Common myeloid progenitor, CD34-positive (primary cell): ENCODE measurements at regions of chr14 and their contacts with region 1.

Region 1: DNA sequence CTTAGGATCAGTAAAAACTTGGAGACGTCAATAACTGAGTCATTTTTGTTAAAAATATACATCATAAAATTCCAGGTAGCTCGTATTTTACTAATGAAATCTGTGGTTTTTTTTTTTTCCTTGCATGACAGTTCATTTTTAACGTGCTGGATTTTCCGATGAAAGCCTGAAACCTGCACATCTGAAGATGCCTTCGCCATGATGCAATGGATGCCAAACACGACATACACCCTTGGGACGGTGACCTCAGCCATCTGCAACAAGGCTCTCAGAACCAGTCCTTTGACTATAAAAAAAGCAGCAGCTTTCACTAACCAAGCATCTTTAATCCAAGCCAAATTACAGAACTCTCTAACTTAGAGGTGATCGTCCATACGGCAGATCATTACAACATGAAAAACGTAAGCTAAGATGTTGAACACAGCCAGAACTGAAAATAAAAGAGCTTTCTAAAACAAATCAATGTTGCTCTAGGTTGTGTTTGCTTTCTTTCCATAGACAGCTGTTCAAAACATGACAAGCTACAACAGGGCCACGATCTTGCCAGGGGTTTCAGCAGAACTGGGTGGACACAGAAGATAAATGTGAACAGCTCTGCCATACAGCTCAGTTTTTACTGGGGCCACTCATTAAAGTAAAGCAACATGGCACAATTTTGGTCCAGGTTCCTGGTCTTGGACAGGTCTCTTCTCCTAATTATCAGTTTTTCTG is 7.8 kb downstream of the NIN start:
- DNase-seq: peak in 1 of 3 donors; percentile 18
- H3K4me3 ChIP-seq: peak overlapping the region in 4 of 7 experiments; percentile 42 to 68 (median 56)
- H3K27ac ChIP-seq: peak overlapping the region; percentile 31 to 72
- H3K4me1 ChIP-seq: peaks cover 42 to 67% (median 54%) of the 10 kb centered on the region in 4 experiments
- H3K27me3 ChIP-seq: no peaks in the 10 kb centered on the region

Region 2: GRCh38 chr14:50798048-50798421 is 25.2 kb before region 1 on chr14:
- CTCF ChIA-PET with region 1: interaction called, 13 read pairs
- POLR2A ChIA-PET with region 1: no interaction called
- DNase-seq: no peak
- H3K4me3 ChIP-seq: no peak overlapping the region
- H3K27ac ChIP-seq: no peak overlapping the region
- H3K4me1 ChIP-seq: no peaks in the 10 kb centered on the region
- H3K27me3 ChIP-seq: no peaks in the 10 kb centered on the region

Region 3: DNA sequence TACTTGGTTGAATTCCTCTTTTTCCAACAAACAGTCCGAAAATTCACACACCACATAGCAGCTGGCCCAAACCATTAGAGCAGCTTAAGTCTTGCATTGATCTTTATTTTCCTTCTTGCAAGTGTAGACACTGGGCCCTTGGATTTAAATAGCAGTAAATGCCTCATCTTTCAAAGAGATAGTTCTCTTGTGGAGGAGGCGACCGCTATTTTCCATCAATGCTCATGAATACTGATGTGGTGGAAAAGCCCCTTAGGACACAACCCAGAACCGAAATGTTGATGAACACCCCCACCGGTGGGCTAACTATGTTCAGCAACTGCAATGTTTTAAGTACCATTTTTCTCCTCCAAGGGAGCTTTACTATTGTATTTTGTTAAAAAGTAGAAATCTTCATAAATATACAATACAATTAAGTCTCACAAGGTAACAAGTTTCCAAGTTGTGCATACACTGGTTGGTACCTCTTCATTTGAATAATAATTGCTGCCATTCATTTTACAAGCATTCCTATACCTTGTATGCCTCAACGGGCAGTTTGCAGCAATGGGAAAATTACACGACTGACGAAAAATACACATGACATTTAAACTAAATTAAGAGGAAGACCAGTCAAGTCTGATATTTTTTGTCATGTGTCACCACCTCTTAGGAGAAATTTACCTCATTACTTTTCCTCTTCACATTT is 10.2 kb before region 1 on chr14:
- CTCF ChIA-PET with region 1: interaction called, 21 read pairs
- POLR2A ChIA-PET with region 1: no interaction called
- DNase-seq: peak in 1 of 3 donors; percentile 31
- H3K4me3 ChIP-seq: peak overlapping the region in 6 of 7 experiments; percentile 17 to 63 (median 48)
- H3K27ac ChIP-seq: peak overlapping the region in 1 of 2 experiments; percentile 62
- H3K4me1 ChIP-seq: peaks cover 15 to 32% (median 20%) of the 10 kb centered on the region in 4 experiments
- H3K27me3 ChIP-seq: no peaks in the 10 kb centered on the region

Region 4: DNA sequence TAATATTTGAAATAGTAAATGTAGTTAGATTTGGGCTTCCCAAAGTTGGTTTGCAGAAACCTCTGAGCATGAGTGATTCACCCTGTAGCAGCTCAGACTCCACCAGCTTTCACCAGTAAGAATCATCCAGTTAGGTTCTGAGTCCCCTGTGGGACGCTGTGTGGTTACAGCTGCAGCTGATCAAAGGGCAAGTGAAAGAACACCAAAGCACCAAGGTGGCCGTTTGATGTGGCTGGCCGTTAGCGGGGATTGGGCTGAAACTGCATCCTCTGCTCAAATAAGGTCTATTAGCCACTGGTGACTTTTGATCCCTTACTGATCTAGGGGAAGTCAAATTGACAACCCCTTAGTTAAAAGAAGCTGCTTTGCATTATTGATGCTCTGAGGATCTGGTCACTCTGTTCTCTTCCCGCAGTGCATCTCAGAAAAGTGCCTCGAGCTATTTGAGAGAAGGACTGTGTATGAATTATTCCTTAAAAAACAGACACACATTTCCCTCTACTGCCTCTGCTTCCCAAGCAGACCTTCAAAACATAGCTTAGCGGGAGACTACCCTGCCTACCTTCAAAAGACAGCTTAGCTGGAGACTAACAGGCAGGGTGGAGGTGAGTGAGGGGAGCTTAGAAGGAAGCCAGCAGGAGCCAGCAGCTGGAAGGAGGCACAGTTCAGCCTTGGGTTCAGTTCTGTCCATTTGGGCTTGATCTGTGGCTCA is 52.3 kb after region 1 on chr14:
- CTCF ChIA-PET with region 1: no interaction called
- POLR2A ChIA-PET with region 1: no interaction called
- DNase-seq: peak in 2 of 3 donors; percentile 82 to 83
- H3K4me3 ChIP-seq: no peak overlapping the region
- H3K27ac ChIP-seq: no peak overlapping the region
- H3K4me1 ChIP-seq: peaks cover 7 to 23% (median 19%) of the 10 kb centered on the region in 4 experiments
- H3K27me3 ChIP-seq: peaks cover 0 to 19% (median 4%) of the 10 kb centered on the region in 5 experiments